ENCODE measurements at regions of chr19 and their contacts with region 1.

Region 1: GRCh38 chr19:18521885-18522624 is at the start of gene ELL:
- DNase-seq: peak; percentile 100
- H3K4me3 Mint-ChIP-seq: peak within 1 kb of the TSS; percentile 85
- H3K27ac Mint-ChIP-seq: peak within 1 kb of the TSS; percentile 89
- H3K4me1 Mint-ChIP-seq: peaks cover 17% of the 10 kb centered on the region
- H3K27me3 Mint-ChIP-seq: no peaks in the 10 kb centered on the region
- total RNA-seq, gene ELL: 14.1 TPM

Region 2: GRCh38 chr19:18117692-18118378 is 404.2 kb before region 1 on chr19:
- CTCF ChIA-PET with region 1: no interaction called
- intact Hi-C with region 1: no loop called
- DNase-seq: peak; percentile 94
- H3K4me3 Mint-ChIP-seq: peak overlapping the region; percentile 73
- H3K27ac Mint-ChIP-seq: peak overlapping the region; percentile 37
- H3K4me1 Mint-ChIP-seq: peaks cover 32% of the 10 kb centered on the region
- H3K27me3 Mint-ChIP-seq: no peaks in the 10 kb centered on the region

Region 3: GRCh38 chr19:18461451-18461850 is 60.6 kb before region 1 on chr19:
- CTCF ChIA-PET with region 1: interaction called, 19 read pairs
- intact Hi-C with region 1: no loop called
- DNase-seq: no peak
- H3K4me3 Mint-ChIP-seq: no peak overlapping the region
- H3K27ac Mint-ChIP-seq: no peak overlapping the region
- H3K4me1 Mint-ChIP-seq: peaks cover 2% of the 10 kb centered on the region
- H3K27me3 Mint-ChIP-seq: no peaks in the 10 kb centered on the region

Region 4: GRCh38 chr19:18508585-18508984 is 13.5 kb before region 1 on chr19:
- CTCF ChIA-PET with region 1: interaction called, 17 read pairs
- intact Hi-C with region 1: no loop called
- DNase-seq: no peak
- H3K4me3 Mint-ChIP-seq: no peak overlapping the region
- H3K27ac Mint-ChIP-seq: no peak overlapping the region
- H3K4me1 Mint-ChIP-seq: peaks cover 57% of the 10 kb centered on the region
- H3K27me3 Mint-ChIP-seq: no peaks in the 10 kb centered on the region

Region 5: GRCh38 chr19:18588611-18589379 is 66.7 kb after region 1 on chr19 and contains the start of gene REX1BD:
- CTCF ChIA-PET with region 1: interaction called, 22 read pairs
- intact Hi-C with region 1: loop called (anchors 1 kb)
- DNase-seq: peak; percentile 83
- H3K4me3 Mint-ChIP-seq: peak within 1 kb of the TSS; percentile 87
- H3K27ac Mint-ChIP-seq: peak within 1 kb of the TSS; percentile 87
- H3K4me1 Mint-ChIP-seq: peaks cover 27% of the 10 kb centered on the region
- H3K27me3 Mint-ChIP-seq: no peaks in the 10 kb centered on the region
- total RNA-seq, gene REX1BD: 62.9 to 68.5 TPM

Region 6: DNA sequence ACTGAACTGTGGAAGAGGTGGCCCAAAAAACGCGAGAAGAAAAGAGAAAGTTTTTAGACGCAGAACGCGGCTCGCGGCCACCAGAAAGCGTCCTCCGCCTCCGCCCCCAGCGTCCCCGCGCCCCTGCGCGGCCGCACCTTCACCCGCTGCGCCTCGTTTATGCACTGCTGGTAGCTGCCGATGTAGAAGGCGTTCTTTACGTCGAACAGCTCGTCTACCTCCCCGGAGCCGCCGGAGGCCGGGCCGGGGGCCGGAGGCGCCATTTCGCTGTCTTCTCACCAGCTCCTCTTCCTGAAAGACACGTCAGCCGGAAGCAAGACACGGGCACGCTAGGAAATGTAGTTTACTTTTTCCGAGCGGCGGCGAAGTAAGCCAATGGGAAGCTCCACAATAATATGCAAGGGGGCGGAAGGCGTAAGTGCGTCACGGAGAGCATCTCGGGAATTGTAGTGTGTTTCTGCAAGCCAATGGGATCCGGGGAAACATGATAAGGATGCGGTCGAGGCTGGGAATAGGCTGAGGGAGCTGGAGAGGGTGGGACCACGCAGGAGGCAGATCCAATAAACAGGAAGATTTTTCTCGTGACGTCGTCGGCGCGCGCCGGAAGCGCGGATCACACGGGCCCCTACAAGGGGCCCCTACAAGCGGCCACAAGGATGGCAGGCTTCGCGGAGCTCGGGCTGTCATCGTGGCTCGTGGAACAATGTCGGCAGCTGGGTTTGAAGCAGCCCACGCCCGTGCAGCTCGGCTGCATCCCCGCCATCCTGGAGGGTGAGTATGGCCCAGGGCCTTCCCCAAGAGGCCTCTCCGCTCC is 397.2 kb after region 1 on chr19 and contains the starts of genes COPE and DDX49:
- CTCF ChIA-PET with region 1: interaction called, 6 read pairs
- intact Hi-C with region 1: loop called (anchors 1 kb)
- DNase-seq: peak; percentile 99
- H3K4me3 Mint-ChIP-seq: peak within 1 kb of the TSS; percentile 94
- H3K27ac Mint-ChIP-seq: peak within 1 kb of the TSS; percentile 88
- H3K4me1 Mint-ChIP-seq: peaks cover 46% of the 10 kb centered on the region
- H3K27me3 Mint-ChIP-seq: no peaks in the 10 kb centered on the region
- total RNA-seq, gene COPE: 199 to 200 TPM
- total RNA-seq, gene DDX49: 48.3 to 50.1 TPM

Measured in activated naive CD4-positive, alpha-beta T cell treated with anti-CD3 and anti-CD28 coated beads for 36 hours (primary cell).